Activated CD8-positive, alpha-beta memory T cell treated with anti-CD3 and anti-CD28 coated beads, Interleukin-2, amount 10 ng/mL, durations not matched to agents 7 days and 5 days (primary cell): ENCODE measurements at regions of chr1 and their contacts with region 1.

Region 1: DNA sequence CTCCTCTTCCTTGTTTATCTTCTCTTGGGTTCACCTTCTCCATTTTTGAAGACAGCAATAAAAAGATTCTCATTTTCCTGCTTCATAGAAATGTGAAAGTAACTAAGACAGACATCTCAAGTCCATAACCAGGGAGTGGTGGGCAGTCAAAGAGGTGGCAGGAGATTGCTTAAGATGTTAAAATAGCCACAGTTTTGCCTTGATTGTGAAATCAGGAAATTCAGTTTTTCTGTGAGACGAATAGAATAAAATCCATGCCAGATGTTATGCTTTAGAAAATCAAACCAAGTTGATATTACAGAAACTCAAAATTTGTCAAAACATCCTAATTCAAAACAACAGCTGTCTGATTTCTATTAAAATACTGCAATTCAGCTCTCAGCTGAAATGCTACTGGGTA is 57.2 kb downstream of the TNN start:
- DNase-seq: no peak
- ATAC-seq: no peak
- H3K4me3 Mint-ChIP-seq: no peak overlapping the region
- H3K27ac Mint-ChIP-seq: no peak overlapping the region
- H3K4me1 Mint-ChIP-seq: peaks cover 1% of the 10 kb centered on the region
- H3K27me3 Mint-ChIP-seq: peaks cover 4% of the 10 kb centered on the region

Region 2: DNA sequence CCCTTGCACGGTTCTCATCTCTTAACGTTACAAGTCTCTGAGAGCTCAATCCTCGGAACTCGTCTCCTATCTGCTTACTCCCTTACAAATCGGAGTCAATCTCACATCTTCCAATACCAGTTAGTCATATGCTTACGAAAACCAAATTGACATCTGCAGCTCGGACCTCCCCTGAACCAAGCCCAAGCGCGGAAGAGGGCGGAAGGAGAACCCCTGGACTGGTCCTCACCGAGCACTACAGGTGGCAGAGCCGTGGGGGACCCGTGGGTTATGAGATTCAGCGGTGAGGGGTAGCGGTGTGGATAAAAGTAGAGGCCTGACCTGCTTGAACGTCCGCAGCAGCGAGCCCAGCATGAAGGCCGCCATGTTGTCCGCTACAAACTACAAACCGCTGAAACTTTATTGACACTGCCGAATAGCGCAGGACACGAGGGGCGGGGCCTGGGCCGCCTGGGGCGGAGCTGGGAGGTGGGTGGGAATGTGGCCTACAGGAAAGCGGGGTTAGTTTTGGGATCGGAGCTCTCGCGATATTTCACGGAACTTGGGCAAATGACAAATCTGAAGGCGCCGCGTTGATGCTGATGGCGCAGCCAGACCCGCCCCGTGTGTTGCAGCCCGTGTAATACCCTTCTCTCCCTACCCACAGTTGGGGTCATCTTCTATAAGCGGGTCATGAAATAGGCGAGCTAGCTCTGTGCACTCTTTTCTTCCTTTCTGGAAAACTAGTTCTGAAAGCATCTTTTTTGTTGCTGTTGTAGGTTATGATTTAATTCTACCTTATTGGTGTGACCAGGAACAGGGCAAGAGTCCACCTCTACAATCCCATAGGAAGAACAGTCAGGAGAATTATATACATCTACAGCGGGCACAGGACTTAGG is 101.6 kb before region 1 on chr1 and contains the start of gene MRPS14:
- CTCF ChIA-PET with region 1: interaction called, 113 read pairs
- DNase-seq: peak; percentile 99
- ATAC-seq: peak; percentile 94
- H3K4me3 Mint-ChIP-seq: peak within 1 kb of the TSS; percentile 90
- H3K27ac Mint-ChIP-seq: peak within 1 kb of the TSS; percentile 88
- H3K4me1 Mint-ChIP-seq: peaks cover 32% of the 10 kb centered on the region
- H3K27me3 Mint-ChIP-seq: no peaks in the 10 kb centered on the region
- total RNA-seq, gene MRPS14: 33.5 to 40.4 TPM

Region 3: GRCh38 chr1:175089136-175089718 is 35.6 kb before region 1 on chr1:
- CTCF ChIA-PET with region 1: interaction called, 11 read pairs
- DNase-seq: no peak
- ATAC-seq: no peak
- H3K4me3 Mint-ChIP-seq: no peak overlapping the region
- H3K27ac Mint-ChIP-seq: no peak overlapping the region
- H3K4me1 Mint-ChIP-seq: no peaks in the 10 kb centered on the region
- H3K27me3 Mint-ChIP-seq: peaks cover 17% of the 10 kb centered on the region